Dendritic cell treated with granulocyte-macrophage colony-stimulating factor and Interleukin-4, amounts not matched to agents 40 ng/mL and 50 ng/mL, for 4 days (primary cell): ENCODE measurements at regions of chr5 and their contacts with region 1.

Region 1: DNA sequence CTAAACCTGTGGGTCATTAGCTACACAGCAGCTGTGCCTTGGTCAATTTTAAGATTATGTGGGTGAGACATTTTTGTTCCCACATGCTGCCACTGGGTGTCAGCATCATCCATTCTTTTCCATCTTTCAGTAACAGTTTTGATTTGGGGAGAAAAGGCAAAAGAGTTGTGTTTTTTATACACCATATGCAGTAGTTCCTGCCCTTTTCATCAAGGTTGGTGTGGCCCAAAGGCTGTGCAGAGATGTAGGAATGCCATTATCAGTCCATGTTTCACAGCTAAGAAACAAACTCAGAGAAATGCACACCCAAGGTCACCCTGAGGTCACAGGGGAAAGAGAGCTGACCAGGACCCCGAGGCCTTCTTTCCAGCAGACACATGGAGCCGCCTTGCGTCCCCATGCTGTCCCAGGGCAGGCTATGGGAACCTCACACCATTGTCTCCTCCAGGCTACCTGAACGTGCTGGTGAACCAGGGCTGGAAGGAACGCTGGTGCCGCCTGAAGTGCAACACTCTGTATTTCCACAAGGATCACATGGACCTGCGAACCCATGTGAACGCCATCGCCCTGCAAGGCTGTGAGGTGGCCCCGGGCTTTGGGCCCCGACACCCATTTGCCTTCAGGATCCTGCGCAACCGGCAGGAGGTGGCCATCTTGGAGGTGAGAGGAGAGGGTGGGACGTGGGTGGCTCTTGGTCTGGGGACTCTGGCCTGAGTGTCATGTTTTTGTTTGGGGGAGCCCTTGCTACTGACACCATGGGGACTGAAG is 27.8 kb upstream of the GRPEL2 start:
- H3K4me3 Mint-ChIP-seq: no peak overlapping the region
- H3K27ac Mint-ChIP-seq: no peak overlapping the region
- H3K4me1 Mint-ChIP-seq: no peaks in the 10 kb centered on the region
- H3K27me3 Mint-ChIP-seq: peaks cover 1% of the 10 kb centered on the region

Region 2: GRCh38 chr5:149371296-149371962 is 54.0 kb after region 1 on chr5:
- intact Hi-C with region 1: loop called (anchors 1 kb)
- H3K4me3 Mint-ChIP-seq: no peak overlapping the region
- H3K27ac Mint-ChIP-seq: no peak overlapping the region
- H3K4me1 Mint-ChIP-seq: peaks cover 6% of the 10 kb centered on the region
- H3K27me3 Mint-ChIP-seq: no peaks in the 10 kb centered on the region

Region 3: DNA sequence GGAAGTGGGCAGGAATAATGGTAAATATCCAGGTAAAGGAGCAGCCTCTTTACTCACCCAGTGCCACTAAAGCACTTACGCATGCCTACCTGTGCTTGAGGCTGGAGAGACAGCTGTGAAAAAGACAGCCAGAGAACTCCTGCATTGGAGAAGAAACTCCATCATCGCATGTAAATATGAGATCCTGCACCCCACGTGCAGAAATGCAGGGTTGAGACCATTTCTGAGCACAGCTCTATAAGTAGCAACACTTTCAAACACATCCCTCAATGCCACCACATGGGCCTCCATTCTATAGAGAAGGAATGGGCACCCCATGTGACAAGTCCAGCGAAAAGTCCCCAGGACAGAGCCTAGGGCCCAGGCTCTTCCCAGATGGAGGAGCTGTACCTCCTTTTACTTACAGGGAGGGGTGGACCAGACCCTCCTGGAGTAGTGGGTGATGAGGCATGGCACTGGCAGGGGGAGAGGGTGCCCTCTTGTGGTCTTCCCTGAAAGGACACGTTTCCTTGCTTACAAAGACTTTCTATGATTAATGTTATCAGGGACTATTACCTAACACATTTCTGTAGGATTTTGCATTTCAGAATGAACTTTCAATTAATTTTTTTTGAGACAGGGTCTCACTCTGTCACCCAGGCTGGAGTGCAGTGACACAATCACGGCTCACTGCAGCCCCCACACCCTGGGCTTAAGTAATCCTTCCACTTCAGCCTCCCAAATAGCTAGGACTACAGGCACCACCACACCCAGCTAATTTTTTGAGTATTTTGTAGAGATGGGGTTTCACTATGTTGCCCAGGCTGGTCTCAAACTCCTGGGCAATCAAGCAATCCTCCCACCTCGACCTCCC is 116.9 kb after region 1 on chr5:
- intact Hi-C with region 1: loop called (anchors 5 kb)
- H3K4me3 Mint-ChIP-seq: no peak overlapping the region
- H3K27ac Mint-ChIP-seq: no peak overlapping the region
- H3K4me1 Mint-ChIP-seq: peaks cover 18% of the 10 kb centered on the region
- H3K27me3 Mint-ChIP-seq: no peaks in the 10 kb centered on the region

Region 4: GRCh38 chr5:149561848-149562247 is 244.4 kb after region 1 on chr5:
- intact Hi-C with region 1: loop called (anchors 2 kb)
- H3K4me3 Mint-ChIP-seq: no peak overlapping the region
- H3K27ac Mint-ChIP-seq: no peak overlapping the region
- H3K4me1 Mint-ChIP-seq: peaks cover 11% of the 10 kb centered on the region
- H3K27me3 Mint-ChIP-seq: no peaks in the 10 kb centered on the region

Region 5: DNA sequence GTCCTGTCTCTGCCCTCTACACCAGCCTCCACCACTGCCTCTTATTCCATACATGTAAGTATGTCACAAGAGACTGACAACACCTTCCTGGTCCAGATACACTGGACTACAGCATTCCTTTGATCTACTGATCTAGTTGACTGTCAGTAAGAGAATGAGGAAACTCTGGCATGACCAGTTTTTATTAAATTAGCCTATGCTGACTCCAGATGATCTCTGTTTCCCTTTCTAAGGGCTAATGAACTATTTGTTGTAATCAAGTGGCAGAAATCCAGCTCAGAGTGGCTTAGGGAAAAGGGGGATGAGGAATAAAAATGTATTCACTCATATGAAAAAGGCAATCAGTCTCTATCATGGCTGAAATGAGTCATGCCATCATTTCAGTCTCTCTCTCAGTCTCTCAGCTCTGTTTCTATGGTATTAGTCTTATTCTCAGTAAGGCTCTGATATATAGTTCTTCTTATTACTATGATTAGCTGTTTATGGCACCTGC is 269.4 kb after region 1 on chr5:
- intact Hi-C with region 1: no loop called
- H3K4me3 Mint-ChIP-seq: no peak overlapping the region
- H3K27ac Mint-ChIP-seq: no peak overlapping the region
- H3K4me1 Mint-ChIP-seq: no peaks in the 10 kb centered on the region
- H3K27me3 Mint-ChIP-seq: peaks cover 11% of the 10 kb centered on the region